Caco-2 (cell line): ENCODE measurements at regions of chr1 and their contacts with region 1.

Region 1: GRCh38 chr1:164660412-164660772 is 101.4 kb downstream of the PBX1 start:
- DNase-seq: no peak
- H3K4me3 ChIP-seq: no peak overlapping the region
- H3K4me3 Mint-ChIP-seq: peak overlapping the region; percentile 63
- H3K27ac Mint-ChIP-seq: peak overlapping the region; percentile 99
- H3K4me1 ChIP-seq: peaks cover 82% of the 10 kb centered on the region
- H3K4me1 Mint-ChIP-seq: peaks cover 48% of the 10 kb centered on the region
- H3K27me3 ChIP-seq: no peaks in the 10 kb centered on the region
- H3K27me3 Mint-ChIP-seq: no peaks in the 10 kb centered on the region
- CTCF ChIP-seq: no peak

Region 2: GRCh38 chr1:164558461-164559341 is 101.7 kb before region 1 on chr1 and contains the start of gene PBX1:
- CTCF ChIA-PET with region 1: interaction called, 3 read pairs
- POLR2A ChIA-PET with region 1: interaction called, 11 read pairs
- intact Hi-C with region 1: loop called (anchors 5 kb)
- DNase-seq: peak; percentile 97 to 99
- H3K4me3 ChIP-seq: peak within 1 kb of the TSS; percentile 74
- H3K4me3 Mint-ChIP-seq: peak within 1 kb of the TSS; percentile 81
- H3K27ac Mint-ChIP-seq: peak within 1 kb of the TSS; percentile 46
- H3K4me1 ChIP-seq: peaks cover 20% of the 10 kb centered on the region
- H3K4me1 Mint-ChIP-seq: peaks cover 7% of the 10 kb centered on the region
- H3K27me3 ChIP-seq: no peaks in the 10 kb centered on the region
- H3K27me3 Mint-ChIP-seq: no peaks in the 10 kb centered on the region
- CTCF ChIP-seq: no peak
- total RNA-seq, gene PBX1: 101 and 103 TPM in 2 replicates

Region 3: GRCh38 chr1:164602480-164603093 is 57.8 kb before region 1 on chr1:
- CTCF ChIA-PET with region 1: interaction called, 4 read pairs
- POLR2A ChIA-PET with region 1: interaction called, 8 read pairs
- intact Hi-C with region 1: loop called (anchors 1 kb)
- DNase-seq: peak in 1 of 2 experiments; percentile 41
- H3K4me3 ChIP-seq: peak overlapping the region; percentile 15; the same call in 1 of the 2 replicates
- H3K4me3 Mint-ChIP-seq: peak overlapping the region; percentile 77
- H3K27ac Mint-ChIP-seq: peak overlapping the region; percentile 93
- H3K4me1 ChIP-seq: peaks cover 53% of the 10 kb centered on the region
- H3K4me1 Mint-ChIP-seq: peaks cover 42% of the 10 kb centered on the region
- H3K27me3 ChIP-seq: no peaks in the 10 kb centered on the region
- H3K27me3 Mint-ChIP-seq: no peaks in the 10 kb centered on the region
- CTCF ChIP-seq: no peak

Region 4: DNA sequence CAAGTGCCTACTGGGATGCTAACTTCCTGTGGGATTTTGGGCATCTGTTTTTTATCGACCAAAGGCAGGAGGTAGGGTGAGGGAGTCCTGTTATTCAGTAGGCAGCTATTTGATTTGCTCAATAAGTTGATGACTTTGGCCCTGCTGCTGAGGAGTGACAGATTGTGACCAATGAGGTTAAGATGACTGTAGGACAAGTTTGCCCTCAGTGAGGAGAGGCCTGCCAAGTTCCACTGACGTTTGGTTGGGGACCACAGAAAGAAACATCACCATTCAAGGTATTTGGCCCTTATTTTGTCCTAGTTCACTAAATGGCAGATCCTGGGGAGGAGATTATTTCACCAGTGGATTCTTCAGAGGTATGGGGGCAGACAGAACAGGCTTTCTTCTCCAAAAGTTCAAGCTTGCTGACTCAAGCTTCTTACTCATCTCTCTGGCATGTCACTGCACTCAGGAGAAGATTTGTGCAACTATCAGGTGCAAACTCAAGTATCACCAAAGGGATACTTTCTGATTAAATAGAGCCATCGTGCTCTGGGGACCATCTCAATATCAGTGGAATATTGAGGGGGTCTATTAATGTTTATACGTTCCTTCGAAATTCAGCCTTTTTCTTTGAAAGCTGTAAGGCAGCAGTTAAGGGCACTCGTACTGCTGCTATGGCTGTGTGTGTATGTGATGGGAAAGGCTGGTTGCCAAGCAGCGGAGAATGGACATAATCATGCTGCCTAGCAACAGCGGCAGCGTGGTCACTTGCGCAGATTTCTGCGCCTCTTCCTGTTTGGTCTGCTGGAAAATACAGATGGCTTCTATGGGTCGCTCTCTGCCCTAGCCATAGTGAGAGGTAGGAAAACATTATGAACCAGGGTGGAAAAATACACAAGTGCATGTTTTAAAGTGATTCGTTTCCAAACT is 22.7 kb before region 1 on chr1:
- CTCF ChIA-PET with region 1: interaction called, 3 read pairs
- POLR2A ChIA-PET with region 1: interaction called, 4 read pairs
- intact Hi-C with region 1: loop called (anchors 2 kb)
- DNase-seq: peak in 1 of 2 experiments; percentile 41
- H3K4me3 ChIP-seq: no peak overlapping the region
- H3K4me3 Mint-ChIP-seq: no peak overlapping the region
- H3K27ac Mint-ChIP-seq: peak overlapping the region; percentile 85
- H3K4me1 ChIP-seq: peaks cover 69% of the 10 kb centered on the region
- H3K4me1 Mint-ChIP-seq: peaks cover 50% of the 10 kb centered on the region
- H3K27me3 ChIP-seq: no peaks in the 10 kb centered on the region
- H3K27me3 Mint-ChIP-seq: no peaks in the 10 kb centered on the region
- CTCF ChIP-seq: no peak

Region 5: DNA sequence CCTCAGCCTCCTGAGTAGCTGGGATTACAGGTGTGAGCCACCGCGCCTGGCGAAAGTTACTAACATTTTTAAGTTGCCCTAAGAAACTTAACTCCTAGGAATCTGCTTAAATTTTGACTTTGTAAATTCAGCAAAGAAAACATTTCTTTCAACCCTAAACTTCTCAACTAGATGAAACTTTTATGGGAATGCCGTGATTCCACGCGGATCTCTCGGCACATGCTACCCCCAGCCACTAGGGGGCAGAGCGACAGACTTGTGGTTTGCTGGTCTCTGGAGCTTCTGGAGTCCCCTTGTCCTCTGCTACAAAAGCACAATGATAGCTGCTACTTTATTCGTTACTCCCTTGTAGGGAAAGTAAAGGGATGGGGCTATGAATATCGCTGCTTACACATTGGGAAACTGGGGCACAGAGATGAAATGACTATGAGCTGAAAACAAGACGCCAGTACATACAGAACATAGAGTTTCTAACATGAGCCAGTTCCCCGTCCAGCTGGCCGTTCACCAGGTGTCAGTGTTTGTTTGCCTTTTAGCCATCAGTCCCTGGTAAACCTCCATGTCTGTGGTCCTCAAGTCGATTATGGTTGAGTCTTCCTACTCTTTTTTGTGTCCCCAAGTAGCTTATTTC is 13.3 kb after region 1 on chr1:
- CTCF ChIA-PET with region 1: interaction called, 9 read pairs
- POLR2A ChIA-PET with region 1: no interaction called
- intact Hi-C with region 1: loop called (anchors 1 kb)
- DNase-seq: peak in 1 of 2 experiments; percentile 42
- H3K4me3 ChIP-seq: no peak overlapping the region
- H3K4me3 Mint-ChIP-seq: no peak overlapping the region
- H3K27ac Mint-ChIP-seq: no peak overlapping the region
- H3K4me1 ChIP-seq: peaks cover 57% of the 10 kb centered on the region
- H3K4me1 Mint-ChIP-seq: peaks cover 44% of the 10 kb centered on the region
- H3K27me3 ChIP-seq: no peaks in the 10 kb centered on the region
- H3K27me3 Mint-ChIP-seq: no peaks in the 10 kb centered on the region
- CTCF ChIP-seq: peak; percentile 42 to 78